ENCODE measurements at regions of chr4 and their contacts with region 1.

Region 1: DNA sequence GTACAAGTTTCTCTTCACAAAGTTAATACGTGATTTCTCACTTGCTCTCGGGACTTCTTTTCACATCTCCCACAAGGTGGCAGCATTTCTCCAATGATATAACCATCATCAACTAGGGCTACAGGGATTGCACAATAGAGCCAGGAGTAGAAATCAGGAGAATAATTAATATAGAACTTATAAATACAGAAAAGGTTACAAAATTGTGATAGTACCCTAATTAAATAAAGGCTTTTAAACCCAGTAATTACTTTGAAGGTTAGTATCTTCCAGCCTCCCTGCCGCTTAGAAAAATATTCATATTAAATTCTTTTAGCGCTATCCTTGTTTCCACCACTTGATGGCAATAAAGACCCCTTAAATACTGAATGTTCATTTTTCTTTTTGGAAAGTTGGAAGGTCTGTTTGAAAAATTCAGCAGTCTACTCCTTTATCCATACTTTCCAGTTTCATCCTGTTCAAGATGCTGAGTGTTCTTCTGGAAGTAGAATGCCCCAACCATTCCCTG is 65.8 kb downstream of the RASGEF1B start:
- DNase-seq: peak; percentile 49
- H3K4me3 Mint-ChIP-seq: no peak overlapping the region
- H3K27ac Mint-ChIP-seq: no peak overlapping the region
- H3K4me1 Mint-ChIP-seq: peaks cover 9% of the 10 kb centered on the region
- H3K27me3 Mint-ChIP-seq: no peaks in the 10 kb centered on the region
- CTCF ChIP-seq: peak; percentile 31

Region 2: DNA sequence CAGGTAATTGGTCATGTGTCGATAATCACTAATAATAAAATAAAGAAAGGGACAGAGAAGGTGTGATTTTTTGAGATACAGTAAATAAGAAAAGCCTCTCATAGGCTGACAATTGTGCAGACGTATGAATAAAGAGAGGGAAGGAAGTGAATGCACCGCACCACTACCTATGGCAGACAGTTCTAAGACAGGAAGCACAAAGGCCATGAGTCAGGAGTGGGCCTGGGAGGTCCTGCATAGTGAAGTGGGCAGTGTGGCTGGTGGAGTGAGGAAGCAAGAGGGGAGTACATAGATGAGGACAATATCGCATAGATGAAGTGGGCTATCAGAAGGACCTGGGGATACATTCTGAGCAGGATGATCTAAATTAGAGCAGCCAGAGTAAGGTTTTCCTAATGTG is 299.8 kb before region 1 on chr4:
- CTCF ChIA-PET with region 1: no interaction called
- intact Hi-C with region 1: no loop called
- DNase-seq: no peak
- H3K4me3 Mint-ChIP-seq: no peak overlapping the region
- H3K27ac Mint-ChIP-seq: no peak overlapping the region
- H3K4me1 Mint-ChIP-seq: no peaks in the 10 kb centered on the region
- H3K27me3 Mint-ChIP-seq: no peaks in the 10 kb centered on the region
- CTCF ChIP-seq: no peak

Region 3: GRCh38 chr4:81844717-81845116 is 438.8 kb after region 1 on chr4:
- CTCF ChIA-PET with region 1: no interaction called
- intact Hi-C with region 1: loop called (anchors 2 kb)
- DNase-seq: peak; percentile 71
- H3K4me3 Mint-ChIP-seq: no peak overlapping the region
- H3K27ac Mint-ChIP-seq: peak overlapping the region; percentile 66
- H3K4me1 Mint-ChIP-seq: peaks cover 55% of the 10 kb centered on the region
- H3K27me3 Mint-ChIP-seq: no peaks in the 10 kb centered on the region
- CTCF ChIP-seq: peak; percentile 52

Region 4: DNA sequence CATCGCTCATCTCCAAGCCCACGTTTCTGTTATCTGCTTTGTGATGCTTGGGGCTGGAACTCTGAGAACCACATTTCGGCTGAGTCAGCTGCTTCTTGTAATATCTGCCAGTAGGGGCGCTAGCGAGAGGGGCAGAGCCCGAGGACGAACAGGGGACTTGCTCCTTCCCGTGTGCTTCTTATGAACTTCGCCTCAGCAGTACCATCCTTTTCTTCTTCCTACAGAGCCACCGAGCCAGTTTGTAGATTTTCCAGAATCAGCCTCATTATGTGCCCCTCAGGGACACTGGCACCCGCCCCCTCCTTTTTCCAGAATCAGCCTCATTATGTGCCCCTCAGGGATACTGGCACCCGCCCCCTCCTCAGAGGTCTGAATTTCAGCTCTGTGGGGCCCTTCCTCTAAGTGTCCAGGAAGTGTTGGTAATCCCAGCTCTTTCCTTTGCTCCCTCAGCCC is 507.5 kb after region 1 on chr4:
- CTCF ChIA-PET with region 1: interaction called, 6 read pairs
- intact Hi-C with region 1: loop called (anchors 10 kb)
- DNase-seq: peak; percentile 45
- H3K4me3 Mint-ChIP-seq: no peak overlapping the region
- H3K27ac Mint-ChIP-seq: no peak overlapping the region
- H3K4me1 Mint-ChIP-seq: peaks cover 20% of the 10 kb centered on the region
- H3K27me3 Mint-ChIP-seq: no peaks in the 10 kb centered on the region
- CTCF ChIP-seq: peak; percentile 43

Region 5: DNA sequence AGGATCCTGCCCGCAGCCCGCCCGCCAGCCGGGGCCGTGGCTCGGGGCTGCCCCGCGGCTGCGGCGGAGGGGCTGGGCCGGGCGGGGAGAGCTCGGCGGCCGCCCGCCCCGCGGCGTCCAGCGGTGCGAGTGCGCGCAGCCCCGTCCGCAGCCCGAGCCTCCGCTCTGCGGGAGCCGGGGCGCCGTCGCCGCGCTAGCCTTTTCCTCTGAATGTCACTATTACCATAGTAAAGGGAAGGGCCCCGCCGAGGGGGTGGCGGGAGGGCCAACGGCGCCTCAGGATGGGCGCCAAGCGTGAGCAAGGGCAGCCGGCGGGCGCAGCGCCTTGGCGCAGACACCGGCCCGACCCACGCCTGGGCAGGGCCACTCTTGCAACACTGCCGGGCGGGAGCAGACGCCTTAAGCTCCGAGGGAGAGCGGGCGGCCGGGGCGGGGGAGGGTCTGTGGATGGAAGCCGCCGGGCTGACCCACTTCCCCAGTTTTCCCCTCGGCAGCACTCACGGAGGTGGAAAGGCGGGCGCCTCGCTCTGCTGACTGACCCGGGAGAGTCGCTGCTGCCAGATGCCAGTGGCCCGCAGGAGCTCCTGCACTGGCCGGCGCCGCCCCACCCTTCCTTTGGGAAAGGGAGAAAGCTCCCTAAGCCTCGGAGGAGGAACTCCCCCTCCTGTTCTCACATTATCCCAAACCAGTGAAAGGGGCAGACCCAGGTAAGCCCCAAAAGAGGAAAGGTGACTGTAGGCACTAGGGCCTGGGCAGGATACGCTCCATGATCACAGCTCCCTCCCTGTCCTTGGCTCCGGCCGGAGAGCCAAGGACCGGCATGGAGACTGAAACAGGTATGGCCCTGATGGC is 638.4 kb after region 1 on chr4:
- CTCF ChIA-PET with region 1: no interaction called
- intact Hi-C with region 1: loop called (anchors 5 kb)
- DNase-seq: peak; percentile 85
- H3K4me3 Mint-ChIP-seq: peak overlapping the region; percentile 83
- H3K27ac Mint-ChIP-seq: no peak overlapping the region
- H3K4me1 Mint-ChIP-seq: peaks cover 11% of the 10 kb centered on the region
- H3K27me3 Mint-ChIP-seq: no peaks in the 10 kb centered on the region
- CTCF ChIP-seq: no peak

Region 6: GRCh38 chr4:82201805-82202641 is 796.1 kb after region 1 on chr4:
- CTCF ChIA-PET with region 1: no interaction called
- intact Hi-C with region 1: loop called (anchors 1 kb)
- DNase-seq: peak; percentile 62
- H3K4me3 Mint-ChIP-seq: no peak overlapping the region
- H3K27ac Mint-ChIP-seq: no peak overlapping the region
- H3K4me1 Mint-ChIP-seq: peaks cover 42% of the 10 kb centered on the region
- H3K27me3 Mint-ChIP-seq: no peaks in the 10 kb centered on the region
- CTCF ChIP-seq: peak; percentile 65

Region 7: GRCh38 chr4:82268050-82268825 is 862.3 kb after region 1 on chr4:
- CTCF ChIA-PET with region 1: no interaction called
- intact Hi-C with region 1: loop called (anchors 1 kb)
- DNase-seq: peak; percentile 44
- H3K4me3 Mint-ChIP-seq: no peak overlapping the region
- H3K27ac Mint-ChIP-seq: no peak overlapping the region
- H3K4me1 Mint-ChIP-seq: peaks cover 10% of the 10 kb centered on the region
- H3K27me3 Mint-ChIP-seq: no peaks in the 10 kb centered on the region
- CTCF ChIP-seq: peak; percentile 46

Measured in Calu3 (cell line).